Dendritic cell treated with granulocyte-macrophage colony-stimulating factor and Interleukin-4, amounts not matched to agents 40 ng/mL and 50 ng/mL, for 4 days (primary cell): ENCODE measurements at regions of chr3 and their contacts with region 1.

Region 1: GRCh38 chr3:50227390-50228183 is 8.4 kb upstream of the GNAI2 start:
- H3K4me3 Mint-ChIP-seq: peak overlapping the region; percentile 82
- H3K27ac Mint-ChIP-seq: peak overlapping the region; percentile 92
- H3K4me1 Mint-ChIP-seq: peaks cover 64% of the 10 kb centered on the region
- H3K27me3 Mint-ChIP-seq: peaks cover 22% of the 10 kb centered on the region

Region 2: GRCh38 chr3:50100956-50101845 is 126.4 kb before region 1 on chr3:
- intact Hi-C with region 1: no loop called
- H3K4me3 Mint-ChIP-seq: no peak overlapping the region
- H3K27ac Mint-ChIP-seq: no peak overlapping the region
- H3K4me1 Mint-ChIP-seq: no peaks in the 10 kb centered on the region
- H3K27me3 Mint-ChIP-seq: no peaks in the 10 kb centered on the region

Region 3: GRCh38 chr3:50121416-50122032 is 106.1 kb before region 1 on chr3:
- intact Hi-C with region 1: loop called (anchors 1 kb)
- H3K4me3 Mint-ChIP-seq: no peak overlapping the region
- H3K27ac Mint-ChIP-seq: no peak overlapping the region
- H3K4me1 Mint-ChIP-seq: peaks cover 5% of the 10 kb centered on the region
- H3K27me3 Mint-ChIP-seq: no peaks in the 10 kb centered on the region

Region 4: GRCh38 chr3:50192689-50193141 is 34.9 kb before region 1 on chr3:
- intact Hi-C with region 1: loop called (anchors 1 kb)
- H3K4me3 Mint-ChIP-seq: no peak overlapping the region
- H3K27ac Mint-ChIP-seq: no peak overlapping the region
- H3K4me1 Mint-ChIP-seq: peaks cover 22% of the 10 kb centered on the region
- H3K27me3 Mint-ChIP-seq: peaks cover 46% of the 10 kb centered on the region

Region 5: GRCh38 chr3:50245831-50246516 is 18.4 kb after region 1 on chr3:
- intact Hi-C with region 1: loop called (anchors 1 kb)
- H3K4me3 Mint-ChIP-seq: peak overlapping the region; percentile 80
- H3K27ac Mint-ChIP-seq: peak overlapping the region; percentile 97
- H3K4me1 Mint-ChIP-seq: peaks cover 97% of the 10 kb centered on the region
- H3K27me3 Mint-ChIP-seq: no peaks in the 10 kb centered on the region

Region 6: DNA sequence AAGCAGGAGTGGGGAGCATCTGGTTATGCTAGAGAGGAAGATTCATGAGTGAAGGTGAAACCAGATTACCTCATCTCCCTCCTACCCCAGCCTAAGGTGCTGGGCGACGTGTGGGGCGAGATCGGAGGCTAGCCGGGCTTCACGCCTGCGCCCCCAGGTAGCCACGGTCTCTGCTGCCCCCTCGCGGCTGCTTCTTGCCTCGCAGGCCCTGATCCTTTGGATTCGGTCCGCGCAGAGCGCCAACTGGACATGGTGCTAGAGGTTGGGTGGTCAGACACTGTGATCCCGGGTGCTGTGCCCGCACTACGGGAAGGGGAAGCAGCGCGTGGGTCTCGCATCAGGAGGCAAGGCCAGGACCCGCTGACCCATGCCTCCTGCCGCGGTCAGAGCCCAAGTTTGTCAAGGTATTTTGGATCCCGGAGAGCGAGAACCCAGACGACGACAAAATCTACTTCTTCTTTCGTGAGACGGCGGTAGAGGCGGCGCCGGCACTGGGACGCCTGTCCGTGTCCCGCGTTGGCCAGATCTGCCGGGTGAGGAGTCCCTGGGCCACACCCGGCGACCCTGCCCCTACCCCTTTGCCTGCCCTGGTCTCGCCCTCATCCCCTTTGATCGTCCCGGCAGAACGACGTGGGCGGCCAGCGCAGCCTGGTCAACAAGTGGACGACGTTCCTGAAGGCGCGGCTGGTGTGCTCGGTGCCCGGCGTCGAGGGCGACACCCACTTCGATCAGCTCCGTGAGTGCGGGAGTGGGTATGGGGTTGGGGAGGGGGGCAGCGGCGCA is 45.5 kb after region 1 on chr3:
- intact Hi-C with region 1: loop called (anchors 1 kb)
- H3K4me3 Mint-ChIP-seq: peak overlapping the region; percentile 80
- H3K27ac Mint-ChIP-seq: peak overlapping the region; percentile 66
- H3K4me1 Mint-ChIP-seq: peaks cover 30% of the 10 kb centered on the region
- H3K27me3 Mint-ChIP-seq: peaks cover 67% of the 10 kb centered on the region